Transverse colon (tissue), 4 donors: ENCODE measurements at regions of chr18 and their contacts with region 1.

Region 1: GRCh38 chr18:6120820-6121279 is 225.5 kb upstream of the TMEM200C start:
- DNase-seq: no peak
- H3K4me3 ChIP-seq: no peak overlapping the region
- H3K27ac ChIP-seq: no peak overlapping the region
- H3K4me1 ChIP-seq: no peaks in the 10 kb centered on the region
- H3K27me3 ChIP-seq: no peaks in the 10 kb centered on the region
- CTCF ChIP-seq: no peak
- EP300 ChIP-seq: no peak
- POLR2A ChIP-seq: no peak

Region 2: GRCh38 chr18:4789506-4789905 is 1331.3 kb before region 1 on chr18:
- in situ Hi-C with region 1: no loop called
- intact Hi-C with region 1: no loop called
- DNase-seq: no peak
- H3K4me3 ChIP-seq: no peak overlapping the region
- H3K27ac ChIP-seq: no peak overlapping the region
- H3K4me1 ChIP-seq: no peaks in the 10 kb centered on the region
- H3K27me3 ChIP-seq: no peaks in the 10 kb centered on the region
- CTCF ChIP-seq: no peak
- EP300 ChIP-seq: no peak
- POLR2A ChIP-seq: no peak

Region 3: GRCh38 chr18:6219116-6219717 is 98.4 kb after region 1 on chr18:
- in situ Hi-C with region 1: loop called in 1 of 4 experiments (anchors 25 kb)
- intact Hi-C with region 1: no loop called
- DNase-seq: no peak
- H3K4me3 ChIP-seq: no peak overlapping the region
- H3K27ac ChIP-seq: no peak overlapping the region
- H3K4me1 ChIP-seq: no peaks in the 10 kb centered on the region
- H3K27me3 ChIP-seq: no peaks in the 10 kb centered on the region
- CTCF ChIP-seq: peak in 3 of 5 experiments; percentile 26 to 34 (median 33)
- EP300 ChIP-seq: no peak
- POLR2A ChIP-seq: no peak

Region 4: DNA sequence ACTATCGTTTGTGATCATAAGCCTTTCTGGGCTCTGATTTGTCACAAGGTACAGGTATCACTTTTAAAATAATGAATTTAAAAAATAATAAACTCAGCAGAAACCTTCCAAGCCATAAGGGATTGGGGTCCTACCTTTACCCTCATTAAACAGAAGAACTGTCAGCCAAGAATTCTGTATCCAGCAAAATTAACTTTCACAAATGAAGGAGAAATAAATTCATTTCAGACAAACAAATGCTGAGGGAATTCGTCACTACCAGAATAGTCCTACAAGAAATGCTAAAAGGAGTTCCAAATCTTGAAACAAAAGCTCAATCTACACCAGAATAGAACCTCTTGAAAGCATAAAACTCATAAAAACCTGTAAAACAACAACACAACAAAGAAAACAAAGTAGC is 268.2 kb after region 1 on chr18:
- in situ Hi-C with region 1: no loop called
- intact Hi-C with region 1: no loop called
- DNase-seq: no peak
- H3K4me3 ChIP-seq: no peak overlapping the region
- H3K27ac ChIP-seq: no peak overlapping the region
- H3K4me1 ChIP-seq: no peaks in the 10 kb centered on the region
- H3K27me3 ChIP-seq: no peaks in the 10 kb centered on the region
- CTCF ChIP-seq: no peak
- EP300 ChIP-seq: no peak
- POLR2A ChIP-seq: no peak